Ascending aorta (tissue), 2 donors: ENCODE measurements at regions of chr19 and their contacts with region 1.

Region 1: DNA sequence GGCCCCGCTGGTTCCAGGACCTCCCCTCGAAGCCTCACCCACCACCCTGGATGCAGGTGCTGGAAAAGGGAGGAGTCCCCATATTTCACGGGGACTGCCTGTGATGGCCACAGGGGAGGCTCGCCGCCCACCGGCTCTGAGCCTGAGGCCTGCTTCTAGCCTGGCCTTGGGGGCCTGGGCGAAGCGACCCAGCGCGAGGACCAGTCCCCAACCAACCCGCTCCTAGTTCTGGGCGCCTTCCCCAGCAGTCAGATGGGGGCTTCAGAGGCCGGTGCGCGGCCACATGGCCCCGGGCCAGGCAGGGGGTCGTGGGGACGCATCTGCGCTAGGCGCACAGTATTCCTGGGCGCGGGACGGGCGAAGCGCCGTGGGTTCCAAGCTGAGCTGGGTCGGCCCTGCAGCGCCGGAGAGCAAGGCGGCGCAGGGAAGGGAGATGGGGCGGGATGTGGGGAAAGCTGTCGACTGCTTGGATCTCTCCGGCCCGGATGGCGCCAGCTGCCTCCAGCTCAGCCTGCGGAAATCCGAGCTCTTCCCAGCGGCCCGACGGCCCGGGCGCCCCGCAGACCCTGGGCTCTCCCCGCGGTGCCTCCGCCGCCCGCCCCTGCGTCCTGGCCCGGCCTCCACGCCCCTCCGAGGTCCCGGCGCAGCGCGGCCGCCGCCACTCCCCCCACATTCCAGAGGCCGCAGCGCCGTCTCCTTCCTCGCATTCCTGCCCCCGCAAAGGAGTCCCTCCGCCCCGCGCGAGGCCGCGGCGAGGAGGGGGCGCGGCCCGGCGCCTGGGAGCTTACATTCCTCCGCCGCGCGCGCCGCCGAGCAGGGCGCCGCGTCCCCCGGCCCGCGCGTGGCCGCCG is at the start of gene WTIP:
- DNase-seq: peak in 1 of 2 donors; percentile 88
- H3K4me3 ChIP-seq: peak within 1 kb of the TSS; percentile 88 to 98
- H3K27ac ChIP-seq: peak within 1 kb of the TSS; percentile 86 to 95
- H3K4me1 ChIP-seq: peaks cover 6 to 21% of the 10 kb centered on the region in 2 donors
- H3K27me3 ChIP-seq: no peaks in the 10 kb centered on the region
- CTCF ChIP-seq: no peak
- total RNA-seq, gene WTIP: 127 TPM

Region 2: DNA sequence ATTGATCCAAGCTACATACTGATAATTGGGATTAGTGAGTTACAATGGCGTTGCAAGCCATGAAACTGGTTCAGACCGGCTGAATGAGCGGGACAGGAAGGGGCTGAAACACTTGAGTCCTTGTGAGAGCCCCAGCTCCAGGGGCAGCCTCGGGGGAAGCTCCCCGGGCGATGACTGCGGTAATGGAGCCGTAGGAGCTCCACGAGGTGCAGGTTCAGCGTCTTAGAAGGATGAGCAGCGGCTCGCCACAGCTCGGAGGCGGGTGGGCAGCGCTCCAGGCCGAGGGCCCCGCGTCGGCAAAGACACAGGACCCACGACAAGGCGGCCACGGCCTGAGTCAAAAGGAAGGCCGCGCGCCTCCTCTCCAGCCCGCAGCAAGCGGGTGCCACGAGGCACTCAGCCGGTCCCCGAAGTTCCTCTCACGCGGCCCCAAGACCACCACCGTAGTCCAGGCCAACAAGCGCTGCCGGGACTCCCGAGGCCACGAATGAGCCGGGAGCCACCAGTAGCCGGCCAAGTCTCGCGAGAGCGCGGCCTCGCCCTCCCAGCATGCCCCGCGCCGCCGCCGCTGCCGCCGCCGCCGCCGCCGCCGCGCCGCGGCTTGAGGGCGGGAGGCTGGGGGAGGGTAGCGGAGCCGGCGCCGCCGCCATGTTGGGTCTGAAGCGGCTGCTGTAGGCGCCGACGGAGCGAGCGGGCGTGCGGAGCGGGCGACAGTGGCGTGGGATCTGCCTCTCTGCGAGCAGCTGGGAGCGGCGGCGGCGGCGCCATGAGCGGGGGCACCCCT is 309.1 kb before region 1 on chr19 and contains the start of gene LSM14A:
- intact Hi-C with region 1: loop called (anchors 10 kb)
- DNase-seq: peak; percentile 82 to 96
- H3K4me3 ChIP-seq: peak within 1 kb of the TSS; percentile 91 to 98
- H3K27ac ChIP-seq: peak within 1 kb of the TSS; percentile 99
- H3K4me1 ChIP-seq: peaks cover 6 to 38% of the 10 kb centered on the region in 2 donors
- H3K27me3 ChIP-seq: no peaks in the 10 kb centered on the region
- CTCF ChIP-seq: peak in 1 of 3 experiments; percentile 12
- total RNA-seq, gene LSM14A: 107 TPM

Region 3: GRCh38 chr19:34359140-34359953 is 121.8 kb before region 1 on chr19:
- intact Hi-C with region 1: loop called (anchors 5 kb)
- DNase-seq: peak; percentile 91 to 97
- H3K4me3 ChIP-seq: peak overlapping the region; percentile 40 to 50
- H3K27ac ChIP-seq: peak overlapping the region; percentile 66 to 83
- H3K4me1 ChIP-seq: peaks cover 0 to 3% of the 10 kb centered on the region in 2 donors
- H3K27me3 ChIP-seq: no peaks in the 10 kb centered on the region
- CTCF ChIP-seq: peak; percentile 44 to 63 (median 44)

Region 4: DNA sequence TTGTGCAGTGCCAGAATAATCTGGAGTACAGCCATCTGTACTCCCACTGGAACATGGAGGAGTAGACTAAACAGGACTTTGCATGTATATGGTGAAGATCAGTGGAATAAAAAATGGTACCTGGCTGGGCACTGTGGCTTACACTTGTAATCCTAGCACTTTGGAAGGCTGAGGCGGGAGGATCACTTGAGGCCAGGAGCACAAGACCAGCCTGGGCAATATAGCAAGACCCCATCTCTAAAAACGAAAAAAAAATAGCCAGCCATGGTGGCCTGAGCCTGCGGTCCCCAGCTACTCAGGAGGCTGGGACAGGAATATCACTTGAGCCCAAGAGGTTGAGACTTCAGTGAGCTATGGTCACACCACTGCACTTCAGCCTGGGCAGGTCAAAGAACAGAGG is 33.0 kb before region 1 on chr19:
- intact Hi-C with region 1: loop called (anchors 5 kb)
- DNase-seq: no peak
- H3K4me3 ChIP-seq: no peak overlapping the region
- H3K27ac ChIP-seq: peak overlapping the region; percentile 1 to 18
- H3K4me1 ChIP-seq: peaks cover 0 to 9% of the 10 kb centered on the region in 2 donors
- H3K27me3 ChIP-seq: no peaks in the 10 kb centered on the region
- CTCF ChIP-seq: no peak

Region 5: GRCh38 chr19:34501339-34502320 is 20.4 kb after region 1 on chr19:
- intact Hi-C with region 1: loop called (anchors 2 kb)
- DNase-seq: peak; percentile 82 to 97
- H3K4me3 ChIP-seq: no peak overlapping the region
- H3K27ac ChIP-seq: peak overlapping the region; percentile 58 to 86
- H3K4me1 ChIP-seq: peaks cover 0 to 18% of the 10 kb centered on the region in 2 donors
- H3K27me3 ChIP-seq: no peaks in the 10 kb centered on the region
- CTCF ChIP-seq: peak; percentile 99 to 100 (median 100)